HepG2 (cell line): ENCODE measurements at regions of chr15 and their contacts with region 1.

Region 1: DNA sequence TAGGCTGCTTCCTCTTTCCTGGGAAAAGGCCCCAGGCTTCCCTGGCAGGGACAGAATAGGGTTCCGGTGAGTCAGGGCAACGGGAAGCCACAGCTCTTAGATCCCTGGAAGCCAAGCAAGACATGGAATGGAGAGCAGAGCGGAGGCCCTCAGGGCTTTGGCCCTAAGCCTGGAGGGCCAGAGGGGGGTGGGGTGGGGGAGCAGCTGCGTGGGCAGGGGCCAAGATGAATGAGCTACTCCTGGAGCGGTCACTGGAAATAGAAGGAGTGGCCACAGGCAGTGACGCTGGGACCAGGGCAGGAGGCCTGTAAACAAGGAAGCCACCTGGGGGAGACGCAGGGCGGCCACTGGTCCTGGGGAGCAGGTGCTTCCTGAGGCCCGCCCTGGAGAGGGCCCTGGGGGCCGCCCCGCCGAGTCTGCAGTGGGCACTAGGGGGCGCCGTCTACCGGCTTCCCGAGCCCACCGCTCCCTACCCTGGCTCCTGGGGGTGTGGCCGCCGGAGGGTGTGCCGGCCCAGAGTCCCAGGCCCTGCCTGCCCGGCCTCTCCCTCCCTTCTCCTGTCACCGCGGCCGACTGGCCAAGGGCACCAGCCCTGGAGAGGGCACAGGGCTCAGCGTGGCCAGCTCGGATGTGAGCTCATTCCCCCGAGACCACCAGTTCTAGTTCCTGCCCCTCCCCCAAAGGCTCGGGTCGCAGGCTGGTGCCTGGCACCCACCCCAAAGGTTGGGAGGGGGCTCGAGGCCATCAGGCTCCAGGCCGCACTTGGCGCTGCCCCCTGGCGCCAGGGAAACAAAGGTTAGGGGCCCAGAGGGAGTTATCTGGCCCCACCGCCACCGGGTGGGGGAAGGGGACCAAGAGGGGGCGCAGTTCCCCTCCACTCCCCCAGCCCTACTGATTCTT is 12.1 kb downstream of the VPS18 start:
- DNase-seq: peak; percentile 70
- ATAC-seq: peak; percentile 90
- H3K4me3 ChIP-seq: peak overlapping the region; percentile 62 to 83 (median 67)
- H3K27ac ChIP-seq: peak overlapping the region; percentile 34
- H3K4me1 ChIP-seq: peaks cover 52% of the 10 kb centered on the region
- H3K27me3 ChIP-seq: no peaks in the 10 kb centered on the region; a peak in 1 of 5 replicates
- CTCF ChIP-seq: peak; percentile 94
- EP300 ChIP-seq: no peak
- POLR2A ChIP-seq: no peak
- RAD21 ChIP-seq: peak; percentile 97

Region 2: DNA sequence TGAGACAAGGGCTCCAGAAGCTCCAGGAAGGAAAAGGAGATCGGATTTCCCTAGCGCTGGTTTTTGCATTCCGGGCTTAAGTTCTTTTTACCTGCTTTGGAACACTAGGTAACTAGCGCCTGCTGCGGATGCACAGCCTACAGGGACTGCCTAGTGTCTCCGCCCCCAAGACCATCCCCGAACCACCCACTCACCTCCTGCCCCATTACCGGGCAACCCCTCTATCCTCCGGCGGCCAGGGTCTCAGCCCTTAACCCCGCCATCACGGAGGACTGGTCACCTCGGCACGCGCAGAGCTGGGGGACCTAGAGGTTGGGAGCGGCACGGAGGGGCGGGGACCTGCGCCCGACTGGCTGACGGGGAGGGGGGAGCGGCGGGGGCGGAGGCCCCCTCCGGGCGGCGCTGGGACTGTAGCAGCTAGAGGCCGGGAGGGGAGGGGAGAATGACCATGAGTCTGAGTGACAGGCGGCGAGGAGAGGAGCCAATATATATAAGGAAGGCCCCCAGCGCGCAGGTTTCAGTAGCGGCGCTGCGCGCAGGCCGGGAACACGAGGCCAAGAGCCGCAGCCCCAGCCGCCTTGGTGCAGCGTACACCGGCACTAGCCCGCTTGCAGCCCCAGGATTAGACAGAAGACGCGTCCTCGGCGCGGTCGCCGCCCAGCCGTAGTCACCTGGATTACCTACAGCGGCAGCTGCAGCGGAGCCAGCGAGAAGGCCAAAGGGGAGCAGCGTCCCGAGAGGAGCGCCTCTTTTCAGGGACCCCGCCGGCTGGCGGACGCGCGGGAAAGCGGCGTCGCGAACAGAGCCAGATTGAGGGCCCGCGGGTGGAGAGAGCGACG is 22.7 kb after region 1 on chr15 and contains the start of gene DLL4:
- CTCF ChIA-PET with region 1: interaction called, 3 read pairs
- POLR2A ChIA-PET with region 1: interaction called, 6 read pairs
- in situ Hi-C with region 1: no loop called
- intact Hi-C with region 1: loop called (anchors 2 kb)
- DNase-seq: peak; percentile 54
- ATAC-seq: peak; percentile 19
- H3K4me3 ChIP-seq: peak within 1 kb of the TSS; percentile 49 to 72 (median 57)
- H3K27ac ChIP-seq: no peak within 1 kb of the TSS
- H3K4me1 ChIP-seq: peaks cover 82% of the 10 kb centered on the region
- H3K27me3 ChIP-seq: peaks cover 9 to 71% of the 10 kb centered on the region in 2 experiments
- CTCF ChIP-seq: no peak
- EP300 ChIP-seq: no peak
- POLR2A ChIP-seq: peak in 1 of 2 experiments; percentile 45; a peak in 1 of 4 replicates
- RAD21 ChIP-seq: no peak
- total RNA-seq, gene DLL4: 0.13 and 0.20 TPM in 2 replicates

Region 3: GRCh38 chr15:40941528-40942336 is 35.4 kb after region 1 on chr15:
- CTCF ChIA-PET with region 1: interaction called, 3 read pairs
- POLR2A ChIA-PET with region 1: interaction called, 5 read pairs
- in situ Hi-C with region 1: no loop called
- intact Hi-C with region 1: loop called (anchors 5 kb)
- DNase-seq: peak; percentile 59
- ATAC-seq: peak; percentile 77
- H3K4me3 ChIP-seq: peak overlapping the region; percentile 52 to 78 (median 66)
- H3K27ac ChIP-seq: peak overlapping the region; percentile 51
- H3K4me1 ChIP-seq: peaks cover 58% of the 10 kb centered on the region
- H3K27me3 ChIP-seq: peaks cover 0 to 42% of the 10 kb centered on the region in 2 experiments; a peak in 3 of 5 replicates
- CTCF ChIP-seq: peak; percentile 57
- EP300 ChIP-seq: no peak
- POLR2A ChIP-seq: peak in 1 of 2 experiments; percentile 40; a peak in 2 of 4 replicates
- RAD21 ChIP-seq: peak; percentile 86

Region 4: DNA sequence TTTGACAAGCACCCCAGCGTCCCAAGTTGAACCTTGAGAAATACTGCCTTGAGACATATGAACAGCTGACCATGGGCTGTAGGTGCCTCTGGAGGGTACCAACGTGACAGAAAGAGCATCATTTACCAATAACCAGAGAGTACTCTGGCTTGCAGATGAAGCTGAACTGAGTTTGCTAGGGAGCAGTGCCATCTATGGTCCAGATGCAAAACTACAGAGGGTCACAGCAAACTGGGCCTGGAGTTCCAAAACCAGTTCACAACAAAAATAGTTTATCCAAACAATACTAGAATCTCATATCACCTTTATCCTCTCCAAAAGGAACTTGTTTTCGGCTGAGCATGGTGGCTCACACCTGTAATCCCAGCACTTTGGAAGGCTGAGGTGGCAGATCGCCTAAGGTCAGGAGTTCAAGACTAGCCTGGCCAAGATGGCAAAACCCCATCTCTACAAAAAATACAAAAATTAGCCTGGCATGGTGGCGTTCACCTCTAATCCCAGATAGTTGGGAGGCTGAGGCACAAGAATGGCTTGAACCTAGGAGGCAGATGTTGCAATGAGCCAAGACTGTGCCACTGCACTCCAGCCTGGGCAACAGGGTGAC is 116.2 kb after region 1 on chr15:
- CTCF ChIA-PET with region 1: interaction called, 44 read pairs
- POLR2A ChIA-PET with region 1: no interaction called
- in situ Hi-C with region 1: loop called (anchors 5 kb)
- intact Hi-C with region 1: loop called (anchors 1 kb)
- DNase-seq: peak; percentile 28
- ATAC-seq: peak; percentile 71
- H3K4me3 ChIP-seq: no peak overlapping the region
- H3K27ac ChIP-seq: no peak overlapping the region
- H3K4me1 ChIP-seq: peaks cover 34% of the 10 kb centered on the region
- H3K27me3 ChIP-seq: no peaks in the 10 kb centered on the region
- CTCF ChIP-seq: peak; percentile 83
- EP300 ChIP-seq: no peak
- POLR2A ChIP-seq: no peak
- RAD21 ChIP-seq: peak; percentile 60; the same call in 1 of the 2 replicates

Region 5: GRCh38 chr15:41180206-41180789 is 274.0 kb after region 1 on chr15:
- CTCF ChIA-PET with region 1: interaction called, 11 read pairs
- POLR2A ChIA-PET with region 1: no interaction called
- in situ Hi-C with region 1: loop called (anchors 5 kb)
- intact Hi-C with region 1: loop called (anchors 1 kb)
- DNase-seq: no peak
- ATAC-seq: no peak
- H3K4me3 ChIP-seq: no peak overlapping the region
- H3K27ac ChIP-seq: no peak overlapping the region
- H3K4me1 ChIP-seq: no peaks in the 10 kb centered on the region
- H3K27me3 ChIP-seq: peaks cover 0 to 1% of the 10 kb centered on the region in 2 experiments; a peak in 1 of 5 replicates
- CTCF ChIP-seq: no peak
- EP300 ChIP-seq: no peak
- POLR2A ChIP-seq: no peak
- RAD21 ChIP-seq: no peak

Region 6: DNA sequence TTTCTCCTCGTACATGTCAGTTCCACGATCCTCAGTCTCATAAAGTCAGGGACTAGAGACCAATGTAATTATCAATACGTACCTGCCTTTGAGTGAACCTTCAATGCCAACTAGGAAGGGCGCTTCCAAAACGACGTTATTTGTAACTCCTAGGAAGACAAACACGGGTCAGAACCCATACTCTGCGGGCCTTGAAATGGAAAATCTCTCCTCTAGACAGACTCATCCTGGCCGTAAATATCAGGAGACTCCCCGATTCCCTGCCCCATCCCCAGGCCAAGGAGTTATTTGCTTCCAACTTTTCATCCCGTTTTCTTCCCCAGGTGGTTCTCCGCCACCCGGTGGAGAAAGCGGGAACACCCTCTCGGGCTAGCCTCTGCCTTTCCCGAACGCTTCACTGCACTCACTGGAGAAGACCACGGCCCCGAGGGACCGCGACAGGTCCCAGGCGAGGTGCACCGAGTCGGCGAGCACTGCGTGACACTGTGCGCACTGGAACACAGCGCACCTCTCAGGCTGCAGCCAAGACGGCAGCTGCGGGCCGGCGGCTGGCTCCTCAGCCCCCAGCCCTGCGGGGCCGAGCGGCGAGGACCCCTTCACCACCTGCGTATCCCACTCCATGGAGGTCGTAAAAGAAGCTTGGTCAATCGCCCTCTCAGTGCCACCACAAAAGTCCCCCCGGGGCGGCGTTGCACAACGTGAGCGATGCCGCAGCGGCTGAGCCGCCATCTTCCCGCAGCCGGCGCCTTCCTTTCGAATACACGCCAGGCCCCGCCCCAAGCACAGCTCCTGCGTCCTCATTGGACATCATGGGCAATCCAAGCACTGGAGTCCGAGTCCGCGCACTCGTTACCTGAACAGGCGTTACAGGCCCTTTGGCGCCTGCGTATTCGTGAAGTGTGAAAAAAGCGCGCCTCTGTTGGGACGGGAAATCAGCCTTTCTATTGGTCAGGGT is 425.8 kb after region 1 on chr15 and contains the start of gene OIP5:
- CTCF ChIA-PET with region 1: no interaction called
- POLR2A ChIA-PET with region 1: no interaction called
- in situ Hi-C with region 1: no loop called
- intact Hi-C with region 1: loop called (anchors 5 kb)
- DNase-seq: peak; percentile 99
- ATAC-seq: peak; percentile 96
- H3K4me3 ChIP-seq: peak within 1 kb of the TSS; percentile 95 to 100 (median 99)
- H3K27ac ChIP-seq: peak within 1 kb of the TSS; percentile 88
- H3K4me1 ChIP-seq: peaks cover 35% of the 10 kb centered on the region
- H3K27me3 ChIP-seq: no peaks in the 10 kb centered on the region; a peak in 1 of 5 replicates
- CTCF ChIP-seq: peak; percentile 81
- EP300 ChIP-seq: no peak; a peak in 1 of 4 replicates
- POLR2A ChIP-seq: peak; percentile 74 to 95
- RAD21 ChIP-seq: peak; percentile 72
- total RNA-seq, gene OIP5: 38.0 and 39.1 TPM in 2 replicates